ENCODE measurements at regions of chr17 and their contacts with region 1.

Region 1: GRCh38 chr17:72077326-72077960 is 43.4 kb upstream of the SOX9 start:
- H3K4me3 ChIP-seq: no peak overlapping the region
- H3K27ac ChIP-seq: no peak overlapping the region
- H3K4me1 ChIP-seq: no peaks in the 10 kb centered on the region
- CTCF ChIP-seq: no peak

Region 2: GRCh38 chr17:72090108-72090507 is 12.7 kb after region 1 on chr17:
- CTCF ChIA-PET with region 1: interaction called, 10 read pairs
- POLR2A ChIA-PET with region 1: no interaction called
- H3K4me3 ChIP-seq: no peak overlapping the region
- H3K27ac ChIP-seq: no peak overlapping the region
- H3K4me1 ChIP-seq: no peaks in the 10 kb centered on the region
- CTCF ChIP-seq: no peak